Caco-2 (cell line): ENCODE measurements at regions of chr3 and their contacts with region 1.

Region 1: GRCh38 chr3:151290673-151291072 is 12.3 kb upstream of the P2RY14 start:
- DNase-seq: no peak
- H3K4me3 ChIP-seq: no peak overlapping the region
- H3K4me3 Mint-ChIP-seq: no peak overlapping the region
- H3K27ac Mint-ChIP-seq: no peak overlapping the region
- H3K4me1 ChIP-seq: peaks cover 5% of the 10 kb centered on the region; the same call in 1 of the 2 replicates
- H3K4me1 Mint-ChIP-seq: no peaks in the 10 kb centered on the region
- H3K27me3 ChIP-seq: no peaks in the 10 kb centered on the region
- H3K27me3 Mint-ChIP-seq: no peaks in the 10 kb centered on the region
- CTCF ChIP-seq: peak in 1 of 2 experiments; percentile 26

Region 2: GRCh38 chr3:151305101-151305750 is 14.6 kb after region 1 on chr3:
- CTCF ChIA-PET with region 1: interaction called, 5 read pairs
- POLR2A ChIA-PET with region 1: no interaction called
- intact Hi-C with region 1: loop called (anchors 1 kb)
- DNase-seq: peak; percentile 91 to 93
- H3K4me3 ChIP-seq: no peak overlapping the region
- H3K4me3 Mint-ChIP-seq: peak overlapping the region; percentile 40
- H3K27ac Mint-ChIP-seq: peak overlapping the region; percentile 82
- H3K4me1 ChIP-seq: peaks cover 13% of the 10 kb centered on the region
- H3K4me1 Mint-ChIP-seq: peaks cover 31% of the 10 kb centered on the region
- H3K27me3 ChIP-seq: no peaks in the 10 kb centered on the region
- H3K27me3 Mint-ChIP-seq: no peaks in the 10 kb centered on the region
- CTCF ChIP-seq: peak in 1 of 2 experiments; percentile 65

Region 3: DNA sequence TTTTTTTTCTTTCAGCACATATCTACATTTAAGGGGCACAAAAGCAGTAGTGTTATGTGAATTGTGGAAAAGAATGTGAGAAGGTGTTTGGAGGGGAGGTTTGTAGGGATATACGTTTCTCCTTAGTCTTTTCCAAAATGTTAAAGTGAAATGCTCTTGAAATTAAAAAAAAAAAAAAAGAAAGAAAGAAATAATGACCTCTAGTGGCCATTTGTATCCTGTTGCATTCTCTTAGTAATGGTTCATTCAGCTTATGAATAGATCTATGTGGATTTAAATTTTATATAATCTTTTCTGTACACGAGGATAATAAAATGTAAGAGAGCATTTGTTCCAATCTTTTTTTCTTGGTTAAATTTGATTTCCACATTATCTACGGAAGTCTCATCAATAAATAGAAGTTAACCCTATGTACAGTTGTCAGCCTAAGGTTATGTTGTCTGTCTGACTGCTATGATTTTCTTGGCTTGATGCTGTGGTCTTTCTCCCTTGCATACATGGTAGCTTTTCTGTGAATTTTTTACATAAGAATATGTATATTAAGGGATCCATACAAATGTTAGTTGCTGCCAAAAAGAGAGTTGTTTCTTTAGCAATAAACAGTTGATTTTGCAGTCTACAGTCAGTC is 37.0 kb after region 1 on chr3:
- CTCF ChIA-PET with region 1: no interaction called
- POLR2A ChIA-PET with region 1: no interaction called
- intact Hi-C with region 1: loop called (anchors 1 kb)
- DNase-seq: no peak
- H3K4me3 ChIP-seq: no peak overlapping the region
- H3K4me3 Mint-ChIP-seq: no peak overlapping the region
- H3K27ac Mint-ChIP-seq: no peak overlapping the region
- H3K4me1 ChIP-seq: no peaks in the 10 kb centered on the region
- H3K4me1 Mint-ChIP-seq: no peaks in the 10 kb centered on the region
- H3K27me3 ChIP-seq: no peaks in the 10 kb centered on the region
- H3K27me3 Mint-ChIP-seq: no peaks in the 10 kb centered on the region
- CTCF ChIP-seq: peak; percentile 52 to 59

Region 4: DNA sequence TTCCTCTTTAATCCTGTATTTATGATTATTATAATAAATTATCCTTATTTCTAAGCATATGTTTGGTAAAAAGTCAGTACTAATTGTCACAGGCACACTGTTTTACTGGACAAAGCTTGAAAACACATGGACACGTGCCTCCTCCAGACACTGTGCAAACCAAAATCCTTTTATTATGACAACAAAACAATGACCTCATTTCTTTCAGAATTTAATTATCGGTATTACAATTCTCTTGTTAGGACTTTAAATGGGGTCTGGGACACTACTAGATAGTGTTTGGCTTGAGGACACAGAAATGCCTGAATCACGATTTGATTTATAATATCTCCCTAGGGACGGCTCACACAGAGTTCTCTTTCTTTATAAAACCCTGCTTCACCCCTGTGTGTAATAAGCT is 277.5 kb after region 1 on chr3:
- CTCF ChIA-PET with region 1: no interaction called
- POLR2A ChIA-PET with region 1: no interaction called
- intact Hi-C with region 1: no loop called
- DNase-seq: no peak
- H3K4me3 ChIP-seq: no peak overlapping the region
- H3K4me3 Mint-ChIP-seq: no peak overlapping the region
- H3K27ac Mint-ChIP-seq: no peak overlapping the region
- H3K4me1 ChIP-seq: peaks cover 2% of the 10 kb centered on the region
- H3K4me1 Mint-ChIP-seq: no peaks in the 10 kb centered on the region
- H3K27me3 ChIP-seq: no peaks in the 10 kb centered on the region
- H3K27me3 Mint-ChIP-seq: no peaks in the 10 kb centered on the region
- CTCF ChIP-seq: no peak